ENCODE measurements at regions of chr15 and their contacts with region 1.

Region 1: GRCh38 chr15:92831655-92832328 is 68.3 kb upstream of the CHD2 start:
- DNase-seq: peak; percentile 98
- ATAC-seq: peak; percentile 96
- H3K4me3 ChIP-seq: peak overlapping the region; percentile 58
- H3K27ac ChIP-seq: peak overlapping the region; percentile 95
- H3K4me1 ChIP-seq: peaks cover 41% of the 10 kb centered on the region
- H3K27me3 ChIP-seq: no peaks in the 10 kb centered on the region
- CTCF ChIP-seq: no peak
- EP300 ChIP-seq: peak; percentile 59 to 67
- POLR2A ChIP-seq: peak; percentile 93
- RAD21 ChIP-seq: peak; percentile 22; the same call in 1 of the 2 replicates

Region 2: GRCh38 chr15:92808978-92809879 is 22.6 kb before region 1 on chr15:
- CTCF ChIA-PET with region 1: interaction called, 54 read pairs
- POLR2A ChIA-PET with region 1: interaction called, 97 read pairs
- RAD21 ChIA-PET with region 1: interaction called, 135 read pairs
- SMC1A ChIA-PET with region 1: interaction called, 122 read pairs
- in situ Hi-C with region 1: no loop called
- intact Hi-C with region 1: loop called (anchors 1 kb)
- DNase-seq: peak; percentile 94
- ATAC-seq: peak; percentile 87
- H3K4me3 ChIP-seq: peak overlapping the region; percentile 79
- H3K27ac ChIP-seq: peak overlapping the region; percentile 100
- H3K4me1 ChIP-seq: peaks cover 2% of the 10 kb centered on the region
- H3K27me3 ChIP-seq: no peaks in the 10 kb centered on the region
- CTCF ChIP-seq: peak; percentile 75 to 99 (median 90); a peak in 5 of 6 replicates
- EP300 ChIP-seq: peak in 1 of 2 experiments; percentile 52; a peak in 2 of 4 replicates
- POLR2A ChIP-seq: peak; percentile 92
- RAD21 ChIP-seq: peak; percentile 61

Region 3: GRCh38 chr15:92845126-92845508 is 13.3 kb after region 1 on chr15:
- CTCF ChIA-PET with region 1: interaction called, 6 read pairs
- POLR2A ChIA-PET with region 1: interaction called, 17 read pairs
- RAD21 ChIA-PET with region 1: interaction called, 17 read pairs
- SMC1A ChIA-PET with region 1: interaction called, 46 read pairs
- in situ Hi-C with region 1: no loop called
- intact Hi-C with region 1: no loop called
- DNase-seq: peak; percentile 74
- ATAC-seq: peak; percentile 80
- H3K4me3 ChIP-seq: peak overlapping the region; percentile 34; the same call in 1 of the 2 replicates
- H3K27ac ChIP-seq: peak overlapping the region; percentile 80
- H3K4me1 ChIP-seq: peaks cover 21% of the 10 kb centered on the region
- H3K27me3 ChIP-seq: no peaks in the 10 kb centered on the region
- CTCF ChIP-seq: no peak
- EP300 ChIP-seq: no peak
- POLR2A ChIP-seq: no peak
- RAD21 ChIP-seq: no peak

Region 4: GRCh38 chr15:92881802-92882696 is 50.3 kb after region 1 on chr15:
- CTCF ChIA-PET with region 1: interaction called, 20 read pairs
- POLR2A ChIA-PET with region 1: interaction called, 134 read pairs
- RAD21 ChIA-PET with region 1: interaction called, 121 read pairs
- SMC1A ChIA-PET with region 1: interaction called, 106 read pairs
- in situ Hi-C with region 1: no loop called
- intact Hi-C with region 1: loop called (anchors 1 kb)
- DNase-seq: peak; percentile 100
- ATAC-seq: peak; percentile 90
- H3K4me3 ChIP-seq: peak overlapping the region; percentile 62
- H3K27ac ChIP-seq: peak overlapping the region; percentile 96
- H3K4me1 ChIP-seq: peaks cover 5% of the 10 kb centered on the region; the same call in 1 of the 2 replicates
- H3K27me3 ChIP-seq: no peaks in the 10 kb centered on the region
- CTCF ChIP-seq: no peak
- EP300 ChIP-seq: no peak
- POLR2A ChIP-seq: peak; percentile 77
- RAD21 ChIP-seq: no peak

Region 5: GRCh38 chr15:92896561-92896960 is 64.8 kb after region 1 on chr15:
- CTCF ChIA-PET with region 1: interaction called, 8 read pairs
- POLR2A ChIA-PET with region 1: interaction called, 88 read pairs
- RAD21 ChIA-PET with region 1: interaction called, 33 read pairs
- SMC1A ChIA-PET with region 1: interaction called, 58 read pairs
- in situ Hi-C with region 1: no loop called
- intact Hi-C with region 1: loop called (anchors 1 kb)
- DNase-seq: no peak
- ATAC-seq: no peak
- H3K4me3 ChIP-seq: no peak overlapping the region
- H3K27ac ChIP-seq: no peak overlapping the region
- H3K4me1 ChIP-seq: no peaks in the 10 kb centered on the region
- H3K27me3 ChIP-seq: no peaks in the 10 kb centered on the region
- CTCF ChIP-seq: no peak
- EP300 ChIP-seq: no peak
- POLR2A ChIP-seq: no peak
- RAD21 ChIP-seq: no peak

Region 6: GRCh38 chr15:92917606-92918407 is 86.0 kb after region 1 on chr15:
- CTCF ChIA-PET with region 1: interaction called, 18 read pairs
- POLR2A ChIA-PET with region 1: interaction called, 20 read pairs
- RAD21 ChIA-PET with region 1: interaction called, 13 read pairs
- SMC1A ChIA-PET with region 1: interaction called, 24 read pairs
- in situ Hi-C with region 1: no loop called
- intact Hi-C with region 1: no loop called
- DNase-seq: peak; percentile 80
- ATAC-seq: peak; percentile 52
- H3K4me3 ChIP-seq: no peak overlapping the region
- H3K27ac ChIP-seq: peak overlapping the region; percentile 29; the same call in 1 of the 2 replicates
- H3K4me1 ChIP-seq: peaks cover 41% of the 10 kb centered on the region
- H3K27me3 ChIP-seq: no peaks in the 10 kb centered on the region
- CTCF ChIP-seq: peak; percentile 71 to 86 (median 84)
- EP300 ChIP-seq: 0 out of 4 replicates have a peak, but pooled peaks of 1 of the 2 experiments have one; percentile 12
- POLR2A ChIP-seq: no peak
- RAD21 ChIP-seq: peak; percentile 80

Region 7: GRCh38 chr15:92942706-92943105 is 110.9 kb after region 1 on chr15:
- CTCF ChIA-PET with region 1: no interaction called
- POLR2A ChIA-PET with region 1: no interaction called
- RAD21 ChIA-PET with region 1: no interaction called
- SMC1A ChIA-PET with region 1: no interaction called
- in situ Hi-C with region 1: no loop called
- intact Hi-C with region 1: no loop called
- DNase-seq: no peak
- ATAC-seq: no peak
- H3K4me3 ChIP-seq: no peak overlapping the region
- H3K27ac ChIP-seq: no peak overlapping the region
- H3K4me1 ChIP-seq: no peaks in the 10 kb centered on the region
- H3K27me3 ChIP-seq: no peaks in the 10 kb centered on the region
- CTCF ChIP-seq: no peak
- EP300 ChIP-seq: no peak
- POLR2A ChIP-seq: no peak
- RAD21 ChIP-seq: no peak

Measured in GM12878 (cell line).